ENCODE measurements at regions of chr17 and their contacts with region 1.

Region 1: DNA sequence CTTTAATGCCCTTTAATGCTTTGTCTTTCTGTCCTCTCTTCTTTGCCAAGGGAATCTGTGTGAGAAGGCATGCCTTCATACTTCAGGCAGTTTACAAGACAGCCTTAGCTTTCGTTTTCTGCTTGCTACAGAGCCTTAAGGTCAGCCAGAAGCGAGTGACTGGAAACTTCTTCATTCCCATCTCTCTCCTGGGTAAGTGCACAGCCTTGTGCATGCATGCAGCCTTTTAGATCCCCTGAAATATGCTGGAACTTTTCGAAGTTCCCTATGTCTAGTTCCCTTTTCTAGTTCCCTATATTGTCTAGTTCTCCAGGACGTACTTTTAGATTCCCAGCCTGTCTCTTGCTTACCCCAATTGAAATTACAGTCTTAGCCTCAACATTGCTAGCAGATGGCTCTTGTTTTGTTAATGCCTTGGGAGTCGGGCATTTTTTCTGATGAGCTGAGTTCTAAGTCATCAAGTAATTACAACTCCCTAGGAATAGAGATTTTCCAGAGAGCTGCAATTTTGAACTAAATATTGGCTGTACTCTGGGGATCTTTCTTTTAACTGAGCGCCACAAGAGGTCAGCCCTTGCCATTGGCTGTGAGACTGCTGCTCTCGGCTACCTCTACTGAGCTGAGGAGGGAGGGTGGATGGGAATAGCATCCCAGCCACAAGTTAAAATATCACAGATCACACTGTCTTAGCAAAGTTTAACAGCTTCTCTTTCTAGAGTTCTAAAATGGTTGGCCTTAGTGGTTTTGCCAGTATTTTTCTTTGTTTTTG is 22.7 kb upstream of the PPM1D start:
- DNase-seq: no peak
- H3K4me3 ChIP-seq: peak overlapping the region; percentile 30
- H3K27me3 ChIP-seq: no peaks in the 10 kb centered on the region
- CTCF ChIP-seq: no peak; the same call in 1 of the 2 replicates

Region 2: DNA sequence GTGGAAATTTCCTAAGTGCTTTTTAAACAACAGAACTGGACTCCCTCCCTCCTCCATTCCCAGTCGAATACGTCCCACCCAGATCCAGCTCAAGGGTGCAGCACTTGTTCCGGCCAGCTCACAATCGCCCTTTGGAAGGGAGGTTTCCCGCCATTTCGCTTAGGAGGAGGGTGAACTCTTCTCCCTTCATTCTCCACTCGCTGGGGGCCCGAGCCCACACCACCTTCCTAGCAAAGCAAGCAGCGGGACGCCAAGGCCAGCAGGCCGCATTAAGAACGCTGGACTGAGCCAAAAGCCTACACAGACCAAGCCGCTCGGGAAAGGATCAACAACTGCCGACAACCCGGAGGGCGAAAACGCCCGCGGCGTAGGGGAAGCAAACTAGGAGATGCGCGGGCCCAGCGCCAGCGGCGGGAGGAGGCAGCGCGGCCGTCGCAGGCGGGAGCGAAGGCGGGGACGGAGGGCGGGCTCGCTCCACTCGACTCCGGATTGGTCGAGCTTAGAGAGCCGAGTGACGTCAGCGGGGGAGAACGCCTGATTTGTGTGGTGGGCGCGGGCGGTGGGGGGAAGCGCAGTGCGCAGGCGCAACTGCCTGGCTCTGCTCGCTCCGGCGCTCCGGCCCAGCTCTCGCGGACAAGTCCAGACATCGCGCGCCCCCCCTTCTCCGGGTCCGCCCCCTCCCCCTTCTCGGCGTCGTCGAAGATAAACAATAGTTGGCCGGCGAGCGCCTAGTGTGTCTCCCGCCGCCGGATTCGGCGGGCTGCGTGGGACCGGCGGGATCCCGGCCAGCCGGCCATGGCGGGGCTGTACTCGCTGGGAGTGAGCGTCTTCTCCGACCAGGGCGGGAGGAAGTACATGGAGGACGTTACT is 22.5 kb after region 1 on chr17 and contains the start of gene PPM1D:
- CTCF ChIA-PET with region 1: interaction called, 18 read pairs
- POLR2A ChIA-PET with region 1: no interaction called
- DNase-seq: peak; percentile 88
- H3K4me3 ChIP-seq: peak within 1 kb of the TSS; percentile 68
- H3K27me3 ChIP-seq: no peaks in the 10 kb centered on the region
- CTCF ChIP-seq: no peak
- polyA plus RNA-seq, gene PPM1D: 4.2 and 7.4 TPM in 2 replicates

Region 3: GRCh38 chr17:60720763-60721531 is 143.6 kb after region 1 on chr17:
- CTCF ChIA-PET with region 1: no interaction called
- POLR2A ChIA-PET with region 1: no interaction called
- DNase-seq: no peak
- H3K4me3 ChIP-seq: no peak overlapping the region
- H3K27me3 ChIP-seq: no peaks in the 10 kb centered on the region
- CTCF ChIP-seq: peak; percentile 87

Measured in BJ (cell line).